ENCODE measurements at regions of chr12 and their contacts with region 1.

Region 1: DNA sequence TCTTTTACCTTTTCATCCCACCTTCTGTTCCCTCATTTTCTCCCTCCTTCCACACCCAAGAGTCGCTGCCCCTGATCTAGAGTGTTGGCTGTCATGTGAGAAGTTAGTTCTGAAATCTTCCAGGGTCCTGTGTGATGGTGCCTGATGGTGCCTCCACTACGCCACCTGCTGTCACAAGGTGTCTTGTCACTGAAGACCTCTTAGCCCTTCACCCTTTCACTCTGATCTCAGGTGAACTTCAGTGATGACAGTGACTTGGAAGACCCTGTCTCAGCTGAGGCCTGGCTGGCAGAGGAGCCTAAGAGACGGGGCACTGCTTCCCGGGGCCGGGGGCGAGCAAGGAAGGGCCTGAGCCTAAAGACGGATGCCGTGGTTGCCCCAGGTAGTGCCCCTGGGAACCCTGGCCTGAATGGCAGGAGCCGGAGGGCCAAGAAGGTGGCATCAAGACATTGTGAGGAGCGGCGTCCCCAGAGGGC is 7.6 kb upstream of the PFDN5 start:
- DNase-seq: peak; percentile 72 to 85
- ATAC-seq: peak; percentile 80 to 95 (median 83)
- H3K4me3 ChIP-seq: no peak overlapping the region
- H3K27ac ChIP-seq: no peak overlapping the region
- H3K4me1 ChIP-seq: no peaks in the 10 kb centered on the region
- H3K27me3 ChIP-seq: no peaks in the 10 kb centered on the region
- CTCF ChIP-seq: peak; percentile 65

Region 2: GRCh38 chr12:53213348-53213747 is 74.4 kb before region 1 on chr12:
- intact Hi-C with region 1: loop called (anchors 1 to 2 kb)
- DNase-seq: peak; percentile 86 to 93
- ATAC-seq: peak; percentile 77 to 85 (median 82)
- H3K4me3 ChIP-seq: no peak overlapping the region
- H3K27ac ChIP-seq: no peak overlapping the region
- H3K4me1 ChIP-seq: peaks cover 13% of the 10 kb centered on the region
- H3K27me3 ChIP-seq: no peaks in the 10 kb centered on the region
- CTCF ChIP-seq: peak; percentile 93

Region 3: GRCh38 chr12:53231826-53232645 is 55.7 kb before region 1 on chr12 and contains the start of gene RARG:
- intact Hi-C with region 1: no loop called
- DNase-seq: peak; percentile 62 to 65
- ATAC-seq: peak; percentile 43 to 68 (median 48)
- H3K4me3 ChIP-seq: peak within 1 kb of the TSS; percentile 69
- H3K27ac ChIP-seq: peak within 1 kb of the TSS; percentile 23
- H3K4me1 ChIP-seq: peaks cover 8% of the 10 kb centered on the region
- H3K27me3 ChIP-seq: peaks cover 0 to 34% (median 5%) of the 10 kb centered on the region in 3 donors
- CTCF ChIP-seq: no peak
- total RNA-seq, gene RARG: 5.0 to 10.7 (median 6.2) TPM